Pancreas (tissue), 10 donors: ENCODE measurements at regions of chr2 and their contacts with region 1.

Region 1: GRCh38 chr2:105595536-105595935 is 149.2 kb upstream of the NCK2 start:
- DNase-seq: no peak
- ATAC-seq: peak in 2 of 4 donors; percentile 39 to 45
- H3K4me3 ChIP-seq: no peak overlapping the region
- H3K27ac ChIP-seq: no peak overlapping the region
- H3K4me1 ChIP-seq: no peaks in the 10 kb centered on the region
- H3K27me3 ChIP-seq: no peaks in the 10 kb centered on the region
- CTCF ChIP-seq: no peak

Region 2: GRCh38 chr2:105744091-105744908 is 148.8 kb after region 1 on chr2:
- intact Hi-C with region 1: loop called in 1 of 3 experiments (anchors 10 kb)
- DNase-seq: peak; percentile 58 to 89 (median 72)
- ATAC-seq: peak; percentile 76 to 89 (median 82)
- H3K4me3 ChIP-seq: peak overlapping the region; percentile 43 to 82 (median 57)
- H3K27ac ChIP-seq: peak overlapping the region; percentile 77 to 93 (median 90)
- H3K4me1 ChIP-seq: peaks cover 0 to 20% (median 15%) of the 10 kb centered on the region in 3 donors
- H3K27me3 ChIP-seq: no peaks in the 10 kb centered on the region
- CTCF ChIP-seq: no peak

Region 3: GRCh38 chr2:105822186-105822585 is 226.7 kb after region 1 on chr2:
- intact Hi-C with region 1: no loop called
- DNase-seq: no peak
- ATAC-seq: peak in 3 of 4 donors; percentile 38 to 65 (median 45)
- H3K4me3 ChIP-seq: no peak overlapping the region
- H3K27ac ChIP-seq: no peak overlapping the region
- H3K4me1 ChIP-seq: peaks cover 0 to 10% (median 2%) of the 10 kb centered on the region in 3 donors
- H3K27me3 ChIP-seq: no peaks in the 10 kb centered on the region
- CTCF ChIP-seq: no peak